ENCODE measurements at regions of chr3 and their contacts with region 1.

Region 1: DNA sequence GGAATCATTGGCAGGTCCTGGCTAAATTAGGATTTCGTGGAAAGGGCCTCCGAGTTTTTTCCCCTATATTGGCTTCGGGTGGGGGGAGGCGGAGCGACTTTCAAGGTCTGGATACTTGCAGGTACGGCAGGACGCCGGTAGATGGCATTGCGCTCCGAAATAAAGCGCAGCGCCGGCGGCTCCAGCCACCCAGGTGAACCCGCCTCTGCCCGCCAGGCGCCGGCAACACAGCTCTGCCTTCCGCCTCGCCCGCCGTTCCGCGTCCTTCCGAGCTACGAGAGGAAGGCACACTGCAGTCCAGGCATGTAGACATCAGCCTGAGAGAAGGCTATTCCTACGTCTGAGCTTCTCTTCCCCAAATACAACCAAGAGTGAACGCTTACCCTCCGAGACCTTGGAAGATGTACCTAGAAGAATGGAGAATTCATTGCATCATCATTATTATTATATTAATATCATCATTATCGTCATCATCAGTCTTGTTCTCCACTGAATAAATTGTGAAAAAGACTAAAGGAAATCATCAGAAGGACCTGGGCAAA is 514.1 kb downstream of the MECOM start:
- DNase-seq: peak; percentile 86
- H3K4me3 Mint-ChIP-seq: peak overlapping the region; percentile 81
- H3K27ac Mint-ChIP-seq: no peak overlapping the region
- H3K4me1 Mint-ChIP-seq: peaks cover 9% of the 10 kb centered on the region
- H3K27me3 Mint-ChIP-seq: no peaks in the 10 kb centered on the region
- CTCF ChIP-seq: peak; percentile 73

Region 2: DNA sequence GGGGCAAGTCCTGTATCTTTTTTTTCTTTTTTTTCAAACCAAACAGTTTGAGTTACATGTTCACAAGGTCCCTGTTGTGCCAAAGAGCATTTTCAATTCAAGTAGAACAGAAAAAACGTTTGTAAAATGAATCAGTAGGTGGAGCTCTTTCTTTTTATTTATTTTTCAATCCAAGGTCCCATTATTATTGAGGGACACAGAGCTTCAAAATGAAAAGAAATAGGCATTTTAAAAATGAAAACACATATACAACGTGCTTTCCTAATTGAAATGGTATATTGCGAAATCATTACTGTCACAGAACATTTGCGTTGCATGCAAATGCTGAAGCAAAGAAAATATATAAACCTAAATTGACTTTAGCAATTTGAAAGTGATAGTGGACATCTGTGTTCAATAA is 196.9 kb before region 1 on chr3:
- CTCF ChIA-PET with region 1: interaction called, 9 read pairs
- POLR2A ChIA-PET with region 1: interaction called, 5 read pairs
- intact Hi-C with region 1: loop called (anchors 5 kb)
- DNase-seq: peak; percentile 36
- H3K4me3 Mint-ChIP-seq: no peak overlapping the region
- H3K27ac Mint-ChIP-seq: no peak overlapping the region
- H3K4me1 Mint-ChIP-seq: peaks cover 5% of the 10 kb centered on the region
- H3K27me3 Mint-ChIP-seq: no peaks in the 10 kb centered on the region
- CTCF ChIP-seq: peak; percentile 45

Region 3: GRCh38 chr3:169138849-169139420 is 10.5 kb before region 1 on chr3:
- CTCF ChIA-PET with region 1: interaction called, 27 read pairs
- POLR2A ChIA-PET with region 1: interaction called, 5 read pairs
- intact Hi-C with region 1: no loop called
- DNase-seq: no peak
- H3K4me3 Mint-ChIP-seq: no peak overlapping the region
- H3K27ac Mint-ChIP-seq: no peak overlapping the region
- H3K4me1 Mint-ChIP-seq: peaks cover 6% of the 10 kb centered on the region
- H3K27me3 Mint-ChIP-seq: no peaks in the 10 kb centered on the region
- CTCF ChIP-seq: no peak

Region 4: DNA sequence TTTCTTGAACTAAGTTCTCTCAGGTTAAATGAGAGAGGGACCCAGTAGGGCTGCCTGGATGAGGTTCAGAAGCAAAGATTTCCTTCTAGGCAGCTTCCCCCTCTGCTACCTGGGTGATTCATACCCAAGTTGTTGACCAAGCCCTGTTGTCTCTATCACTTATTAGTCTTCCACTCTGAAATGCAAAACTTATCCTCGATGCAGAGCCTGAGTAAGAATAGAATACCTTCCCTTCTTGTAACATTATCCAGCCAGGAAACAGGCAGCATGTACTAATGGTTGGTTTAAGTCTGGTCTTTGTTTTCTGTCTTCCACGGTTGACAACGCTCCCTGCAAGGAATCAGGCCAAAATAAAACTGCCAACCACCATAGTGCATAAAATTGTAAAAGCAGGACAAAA is 136.8 kb after region 1 on chr3:
- CTCF ChIA-PET with region 1: interaction called, 14 read pairs
- POLR2A ChIA-PET with region 1: no interaction called
- intact Hi-C with region 1: no loop called
- DNase-seq: no peak
- H3K4me3 Mint-ChIP-seq: no peak overlapping the region
- H3K27ac Mint-ChIP-seq: no peak overlapping the region
- H3K4me1 Mint-ChIP-seq: no peaks in the 10 kb centered on the region
- H3K27me3 Mint-ChIP-seq: no peaks in the 10 kb centered on the region
- CTCF ChIP-seq: no peak

Region 5: DNA sequence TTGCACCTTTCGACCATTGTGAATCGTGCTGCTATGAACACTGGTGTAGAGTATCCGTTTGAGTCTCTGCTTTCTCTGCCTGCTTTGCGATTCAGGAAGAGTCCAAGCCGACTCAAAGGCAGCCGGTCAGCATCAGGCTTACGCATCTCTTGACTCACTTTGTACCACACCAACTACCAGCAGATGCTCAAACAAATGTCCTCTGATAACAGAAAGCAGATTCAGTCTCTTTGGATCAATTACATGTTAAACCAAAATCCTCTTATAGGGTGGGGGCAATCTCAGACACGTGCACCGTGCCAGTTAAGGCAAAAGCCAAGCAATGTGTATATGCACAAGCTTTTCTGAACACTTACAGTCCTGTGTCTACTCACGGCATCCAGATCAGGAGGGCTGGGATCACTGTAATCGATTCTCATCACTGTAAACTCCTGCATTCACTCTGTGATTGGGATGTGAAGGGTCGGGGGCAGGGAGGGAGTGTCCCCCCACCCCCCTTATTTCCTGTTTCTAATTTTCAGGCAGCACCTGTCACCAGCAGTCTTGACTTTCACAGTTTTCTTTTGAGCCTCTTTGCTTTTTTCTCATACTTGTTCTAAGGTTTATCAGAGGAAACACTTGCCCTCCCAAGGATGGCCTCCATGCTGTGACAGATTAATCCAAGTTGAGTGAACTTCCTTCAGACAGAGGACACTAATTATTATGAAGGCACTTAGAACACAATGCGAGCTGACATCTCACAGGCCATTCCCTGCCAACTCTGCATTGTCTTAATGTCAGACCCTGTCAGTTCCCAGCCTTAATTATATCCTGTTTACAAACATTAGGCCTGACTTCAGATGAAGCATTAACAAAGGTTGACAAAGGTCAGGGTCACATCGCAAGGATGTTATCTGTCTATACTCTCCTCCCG is 360.6 kb after region 1 on chr3:
- CTCF ChIA-PET with region 1: interaction called, 4 read pairs
- POLR2A ChIA-PET with region 1: no interaction called
- intact Hi-C with region 1: loop called (anchors 1 kb)
- DNase-seq: no peak
- H3K4me3 Mint-ChIP-seq: no peak overlapping the region
- H3K27ac Mint-ChIP-seq: no peak overlapping the region
- H3K4me1 Mint-ChIP-seq: no peaks in the 10 kb centered on the region
- H3K27me3 Mint-ChIP-seq: no peaks in the 10 kb centered on the region
- CTCF ChIP-seq: no peak

Region 6: GRCh38 chr3:169744366-169745054 is 595.1 kb after region 1 on chr3:
- CTCF ChIA-PET with region 1: interaction called, 40 read pairs
- POLR2A ChIA-PET with region 1: interaction called, 3 read pairs
- intact Hi-C with region 1: loop called (anchors 1 kb)
- DNase-seq: no peak
- H3K4me3 Mint-ChIP-seq: no peak overlapping the region
- H3K27ac Mint-ChIP-seq: no peak overlapping the region
- H3K4me1 Mint-ChIP-seq: peaks cover 9% of the 10 kb centered on the region
- H3K27me3 Mint-ChIP-seq: no peaks in the 10 kb centered on the region
- CTCF ChIP-seq: peak; percentile 24

Measured in MCF 10A (cell line).